Activated CD4-positive, alpha-beta T cell treated with anti-CD3 and anti-CD28 coated beads, Interleukin-2, amount 10 ng/mL, durations not matched to agents 7 days and 5 days (primary cell): ENCODE measurements at regions of chr10 and their contacts with region 1.

Region 1: GRCh38 chr10:110354322-110354766 is 49.6 kb upstream of the SMNDC1 start:
- DNase-seq: peak; percentile 82
- H3K4me3 Mint-ChIP-seq: peak overlapping the region; percentile 8
- H3K27ac Mint-ChIP-seq: peak overlapping the region; percentile 76
- H3K4me1 Mint-ChIP-seq: peaks cover 58% of the 10 kb centered on the region
- H3K27me3 Mint-ChIP-seq: peaks cover 3% of the 10 kb centered on the region

Region 2: GRCh38 chr10:110059925-110060324 is 294.4 kb before region 1 on chr10:
- CTCF ChIA-PET with region 1: no interaction called
- POLR2A ChIA-PET with region 1: no interaction called
- DNase-seq: no peak
- H3K4me3 Mint-ChIP-seq: no peak overlapping the region
- H3K27ac Mint-ChIP-seq: no peak overlapping the region
- H3K4me1 Mint-ChIP-seq: peaks cover 83% of the 10 kb centered on the region
- H3K27me3 Mint-ChIP-seq: no peaks in the 10 kb centered on the region

Region 3: GRCh38 chr10:110304780-110305421 is 49.4 kb before region 1 on chr10 and contains the start of gene SMNDC1:
- CTCF ChIA-PET with region 1: interaction called, 22 read pairs
- POLR2A ChIA-PET with region 1: no interaction called
- DNase-seq: peak; percentile 98
- H3K4me3 Mint-ChIP-seq: peak within 1 kb of the TSS; percentile 96
- H3K27ac Mint-ChIP-seq: peak within 1 kb of the TSS; percentile 99
- H3K4me1 Mint-ChIP-seq: peaks cover 56% of the 10 kb centered on the region
- H3K27me3 Mint-ChIP-seq: peaks cover 2% of the 10 kb centered on the region
- total RNA-seq, gene SMNDC1: 36.3 to 44.2 TPM

Region 4: DNA sequence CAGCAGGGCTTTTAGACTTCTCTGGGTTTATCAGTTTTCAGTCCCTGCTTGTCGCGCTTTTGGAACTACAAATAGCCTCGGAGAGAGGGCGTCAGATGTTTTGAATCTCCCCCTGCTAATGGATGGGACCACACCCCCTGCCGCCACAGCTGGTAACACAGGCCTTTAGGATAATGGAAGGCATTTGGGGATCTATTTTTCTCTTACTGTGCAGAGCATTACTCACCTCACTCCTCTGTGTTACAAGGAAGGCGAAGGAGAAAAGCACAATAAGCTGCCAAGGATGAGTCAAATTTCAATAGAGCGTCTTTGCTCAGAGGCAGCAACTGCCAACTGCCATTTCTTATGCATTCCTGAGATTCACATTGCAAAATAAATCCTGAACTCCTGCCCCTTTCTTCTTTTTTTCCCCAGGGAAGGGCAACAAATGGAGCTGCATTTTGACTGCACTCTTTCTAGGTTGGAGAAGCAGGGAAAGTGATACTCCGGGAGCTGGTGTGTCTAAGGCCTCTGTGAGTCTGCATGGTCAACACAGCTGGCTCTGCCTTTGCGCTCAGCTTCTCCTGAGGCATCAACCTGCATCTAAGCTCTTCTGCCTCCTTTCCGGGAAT is 18.1 kb before region 1 on chr10:
- CTCF ChIA-PET with region 1: interaction called, 31 read pairs
- POLR2A ChIA-PET with region 1: no interaction called
- DNase-seq: no peak
- H3K4me3 Mint-ChIP-seq: no peak overlapping the region
- H3K27ac Mint-ChIP-seq: peak overlapping the region; percentile 71
- H3K4me1 Mint-ChIP-seq: peaks cover 29% of the 10 kb centered on the region
- H3K27me3 Mint-ChIP-seq: peaks cover 3% of the 10 kb centered on the region

Region 5: DNA sequence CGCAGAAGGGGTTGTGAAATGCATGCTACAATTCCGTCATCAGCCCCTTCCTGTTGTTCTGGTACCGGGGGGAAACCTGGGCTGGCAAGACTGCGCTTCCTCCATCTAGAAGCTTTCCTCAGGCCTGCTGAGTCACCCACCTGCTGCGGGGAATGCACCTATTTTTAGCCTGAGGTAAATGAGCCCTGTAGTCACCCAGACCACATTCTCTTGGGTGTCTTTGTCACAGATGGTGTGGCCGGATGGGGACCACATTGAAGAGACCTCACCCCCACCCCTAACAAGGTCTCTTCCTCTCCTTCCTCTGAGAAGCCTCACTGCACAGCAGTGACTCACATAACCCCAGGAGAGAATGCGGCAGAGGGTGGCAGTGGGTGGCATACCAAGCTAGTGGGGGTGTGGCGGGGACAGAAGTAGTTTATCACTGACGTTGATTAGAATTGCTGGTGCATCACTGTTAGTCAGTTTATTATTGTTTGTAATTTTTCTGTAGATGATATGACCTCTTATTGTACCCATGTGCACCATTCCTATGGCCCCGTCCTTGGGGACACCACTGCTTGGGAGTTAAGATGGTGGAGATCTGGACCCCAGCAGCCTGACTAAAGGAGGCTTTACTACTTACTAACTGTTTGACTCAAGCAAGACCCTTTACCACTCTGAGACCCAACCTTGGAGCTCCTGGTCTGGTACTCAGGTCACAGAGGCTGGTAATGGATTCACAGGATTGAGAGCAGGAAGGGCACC is 60.4 kb after region 1 on chr10:
- CTCF ChIA-PET with region 1: interaction called, 37 read pairs
- POLR2A ChIA-PET with region 1: no interaction called
- DNase-seq: peak; percentile 90
- H3K4me3 Mint-ChIP-seq: peak overlapping the region; percentile 21
- H3K27ac Mint-ChIP-seq: peak overlapping the region; percentile 88
- H3K4me1 Mint-ChIP-seq: peaks cover 48% of the 10 kb centered on the region
- H3K27me3 Mint-ChIP-seq: no peaks in the 10 kb centered on the region

Region 6: DNA sequence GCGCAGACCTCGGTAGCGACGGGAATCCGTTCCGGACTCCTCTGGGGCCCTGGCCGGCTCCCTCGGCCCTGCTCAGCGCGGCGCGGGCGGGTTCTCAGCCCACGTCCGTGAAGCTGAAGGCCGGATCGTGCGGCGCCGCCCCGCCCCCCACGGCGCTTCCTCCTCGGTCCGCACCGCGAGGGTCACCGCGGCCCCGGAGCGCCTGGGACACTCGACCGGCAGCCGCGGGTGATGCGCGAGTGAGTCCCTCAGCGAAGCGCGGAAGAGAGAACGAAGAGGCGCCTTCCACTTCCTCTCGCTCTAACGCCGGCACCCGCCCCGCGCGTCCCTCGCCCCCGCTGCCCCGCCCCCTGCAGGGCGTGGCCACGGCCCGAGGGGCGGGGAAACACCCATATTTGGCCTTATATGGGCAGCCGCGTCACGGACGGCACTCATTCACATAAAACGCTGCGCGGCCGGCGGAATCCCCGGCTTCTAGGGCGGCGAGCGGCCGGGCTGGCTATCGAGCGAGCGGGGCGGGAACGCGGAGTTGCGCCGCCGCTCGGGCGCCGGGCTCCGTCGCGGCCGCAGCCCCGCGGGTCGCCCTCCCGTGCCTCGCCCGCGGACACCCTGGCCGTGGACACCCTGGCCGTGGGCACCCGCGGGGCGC is 143.2 kb after region 1 on chr10 and contains the start of gene DUSP5:
- CTCF ChIA-PET with region 1: interaction called, 21 read pairs
- POLR2A ChIA-PET with region 1: interaction called, 4 read pairs
- DNase-seq: peak; percentile 94
- H3K4me3 Mint-ChIP-seq: peak within 1 kb of the TSS; percentile 89
- H3K27ac Mint-ChIP-seq: peak within 1 kb of the TSS; percentile 89
- H3K4me1 Mint-ChIP-seq: peaks cover 57% of the 10 kb centered on the region
- H3K27me3 Mint-ChIP-seq: no peaks in the 10 kb centered on the region
- total RNA-seq, gene DUSP5: 24.8 to 25.9 TPM

Region 7: GRCh38 chr10:110547139-110547761 is 192.9 kb after region 1 on chr10:
- CTCF ChIA-PET with region 1: interaction called, 33 read pairs
- POLR2A ChIA-PET with region 1: no interaction called
- DNase-seq: peak; percentile 42
- H3K4me3 Mint-ChIP-seq: no peak overlapping the region
- H3K27ac Mint-ChIP-seq: no peak overlapping the region
- H3K4me1 Mint-ChIP-seq: peaks cover 8% of the 10 kb centered on the region
- H3K27me3 Mint-ChIP-seq: peaks cover 26% of the 10 kb centered on the region